Endothelial cell of umbilical vein (primary cell): ENCODE measurements at regions of chr2 and their contacts with region 1.

Region 1: GRCh38 chr2:204325468-204325867 is 219.8 kb upstream of the PARD3B start:
- DNase-seq: peak; percentile 89
- H3K4me3 ChIP-seq: no peak overlapping the region
- H3K27ac ChIP-seq: no peak overlapping the region
- H3K4me1 ChIP-seq: peaks cover 19% of the 10 kb centered on the region
- H3K27me3 ChIP-seq: no peaks in the 10 kb centered on the region
- CTCF ChIP-seq: peak; percentile 61 to 68
- POLR2A ChIP-seq: no peak

Region 2: GRCh38 chr2:204145263-204145751 is 180.2 kb before region 1 on chr2:
- CTCF ChIA-PET with region 1: interaction called, 15 read pairs
- POLR2A ChIA-PET with region 1: no interaction called
- dilution Hi-C with region 1: no loop called
- intact Hi-C with region 1: loop called (anchors 1 kb)
- DNase-seq: peak; percentile 78
- H3K4me3 ChIP-seq: peak overlapping the region in 2 of 3 experiments; percentile 20 to 46
- H3K27ac ChIP-seq: no peak overlapping the region
- H3K4me1 ChIP-seq: peaks cover 4% of the 10 kb centered on the region
- H3K27me3 ChIP-seq: peaks cover 0 to 6% of the 10 kb centered on the region in 2 experiments
- CTCF ChIP-seq: peak; percentile 89 to 91
- POLR2A ChIP-seq: no peak

Region 3: GRCh38 chr2:204538182-204539018 is 212.9 kb after region 1 on chr2:
- CTCF ChIA-PET with region 1: interaction called, 3 read pairs
- POLR2A ChIA-PET with region 1: no interaction called
- dilution Hi-C with region 1: no loop called
- intact Hi-C with region 1: loop called (anchors 1 kb)
- DNase-seq: peak; percentile 93
- H3K4me3 ChIP-seq: peak overlapping the region in 2 of 3 experiments; percentile 6 to 51
- H3K27ac ChIP-seq: peak overlapping the region; percentile 81
- H3K4me1 ChIP-seq: peaks cover 32% of the 10 kb centered on the region
- H3K27me3 ChIP-seq: no peaks in the 10 kb centered on the region
- CTCF ChIP-seq: no peak
- POLR2A ChIP-seq: no peak

Region 4: DNA sequence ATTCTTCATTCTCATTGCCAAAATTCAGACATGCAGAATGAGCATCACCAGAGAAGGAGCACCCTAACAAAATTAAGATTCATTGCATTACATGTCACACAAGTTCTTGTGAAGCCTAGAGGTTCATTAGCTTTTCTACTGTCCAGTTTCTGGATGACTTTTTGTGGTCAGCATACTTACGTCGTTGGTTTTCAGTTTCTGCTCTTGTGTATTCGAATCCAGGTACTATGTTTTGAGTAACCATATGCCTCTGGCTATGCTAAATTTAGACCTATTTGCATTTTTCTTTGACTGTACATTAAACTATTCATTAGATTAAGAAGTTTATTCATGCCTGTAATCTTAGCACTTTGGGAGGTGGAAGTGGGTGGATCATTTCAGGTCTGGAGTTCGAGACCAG is 471.1 kb after region 1 on chr2:
- CTCF ChIA-PET with region 1: no interaction called
- POLR2A ChIA-PET with region 1: no interaction called
- dilution Hi-C with region 1: no loop called
- intact Hi-C with region 1: loop called (anchors 5 kb)
- DNase-seq: no peak
- H3K4me3 ChIP-seq: no peak overlapping the region
- H3K27ac ChIP-seq: no peak overlapping the region
- H3K4me1 ChIP-seq: peaks cover 22% of the 10 kb centered on the region
- H3K27me3 ChIP-seq: no peaks in the 10 kb centered on the region
- CTCF ChIP-seq: no peak
- POLR2A ChIP-seq: no peak

Region 5: GRCh38 chr2:205024822-205025518 is 699.5 kb after region 1 on chr2:
- CTCF ChIA-PET with region 1: no interaction called
- POLR2A ChIA-PET with region 1: no interaction called
- dilution Hi-C with region 1: no loop called
- intact Hi-C with region 1: loop called (anchors 10 kb)
- DNase-seq: peak; percentile 96
- H3K4me3 ChIP-seq: peak overlapping the region in 1 of 3 experiments; percentile 1
- H3K27ac ChIP-seq: peak overlapping the region; percentile 44
- H3K4me1 ChIP-seq: peaks cover 13% of the 10 kb centered on the region
- H3K27me3 ChIP-seq: no peaks in the 10 kb centered on the region
- CTCF ChIP-seq: no peak
- POLR2A ChIP-seq: no peak

Region 6: DNA sequence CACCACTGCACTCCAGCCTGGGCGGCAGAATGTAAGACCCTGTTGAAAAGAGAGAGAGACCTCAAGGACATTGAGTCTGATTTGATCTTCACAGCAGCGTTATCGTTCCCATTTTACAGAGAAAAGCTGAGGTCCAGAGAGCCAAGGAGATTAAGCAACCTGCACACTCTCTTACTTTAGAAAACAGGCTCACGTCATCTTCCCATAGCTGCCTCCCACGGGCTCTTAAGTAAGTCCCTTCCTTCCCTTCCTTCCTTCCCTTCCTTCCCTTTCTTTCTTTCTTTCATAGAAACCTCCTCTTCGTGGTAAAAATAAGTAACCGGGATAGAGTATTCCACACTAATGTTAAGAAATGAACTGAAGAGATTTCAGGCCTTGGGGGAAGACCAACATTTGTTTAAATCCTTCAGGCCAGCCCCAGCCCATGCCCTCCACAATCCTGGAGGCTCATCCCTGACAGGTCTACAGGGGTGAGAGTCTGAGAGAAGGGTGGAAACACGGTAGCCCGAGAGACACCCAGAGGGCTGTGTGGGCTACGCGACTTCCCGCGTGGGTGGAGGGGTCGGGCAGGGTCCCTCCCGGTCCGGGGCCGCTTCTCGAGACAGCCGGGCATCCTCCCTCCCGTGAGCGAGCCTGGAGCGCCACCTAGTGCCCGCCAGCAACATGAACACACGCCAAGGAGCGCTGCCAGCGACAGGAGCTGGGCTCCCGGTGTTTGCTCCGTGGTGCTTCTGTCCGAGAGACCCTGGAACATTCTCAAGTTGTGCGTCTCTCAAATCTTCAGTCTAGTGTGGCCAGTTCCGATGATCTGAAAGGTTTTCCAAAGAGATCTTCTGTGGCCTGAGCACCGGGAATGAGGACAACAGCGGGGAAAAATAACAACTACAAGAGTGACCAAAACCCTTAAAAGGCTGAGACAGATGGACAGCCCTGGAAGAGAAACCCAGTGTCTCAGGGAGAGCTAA is 1600.2 kb after region 1 on chr2:
- CTCF ChIA-PET with region 1: no interaction called
- POLR2A ChIA-PET with region 1: no interaction called
- dilution Hi-C with region 1: no loop called
- intact Hi-C with region 1: loop called (anchors 10 kb)
- DNase-seq: peak; percentile 79
- H3K4me3 ChIP-seq: peak overlapping the region in 1 of 3 experiments; percentile 47
- H3K27ac ChIP-seq: no peak overlapping the region
- H3K4me1 ChIP-seq: peaks cover 17% of the 10 kb centered on the region
- H3K27me3 ChIP-seq: peaks cover 5 to 6% of the 10 kb centered on the region in 2 experiments
- CTCF ChIP-seq: peak; percentile 92 to 96
- POLR2A ChIP-seq: no peak